Endothelial cell of umbilical vein (primary cell): ENCODE measurements at regions of chr17 and their contacts with region 1.

Region 1: DNA sequence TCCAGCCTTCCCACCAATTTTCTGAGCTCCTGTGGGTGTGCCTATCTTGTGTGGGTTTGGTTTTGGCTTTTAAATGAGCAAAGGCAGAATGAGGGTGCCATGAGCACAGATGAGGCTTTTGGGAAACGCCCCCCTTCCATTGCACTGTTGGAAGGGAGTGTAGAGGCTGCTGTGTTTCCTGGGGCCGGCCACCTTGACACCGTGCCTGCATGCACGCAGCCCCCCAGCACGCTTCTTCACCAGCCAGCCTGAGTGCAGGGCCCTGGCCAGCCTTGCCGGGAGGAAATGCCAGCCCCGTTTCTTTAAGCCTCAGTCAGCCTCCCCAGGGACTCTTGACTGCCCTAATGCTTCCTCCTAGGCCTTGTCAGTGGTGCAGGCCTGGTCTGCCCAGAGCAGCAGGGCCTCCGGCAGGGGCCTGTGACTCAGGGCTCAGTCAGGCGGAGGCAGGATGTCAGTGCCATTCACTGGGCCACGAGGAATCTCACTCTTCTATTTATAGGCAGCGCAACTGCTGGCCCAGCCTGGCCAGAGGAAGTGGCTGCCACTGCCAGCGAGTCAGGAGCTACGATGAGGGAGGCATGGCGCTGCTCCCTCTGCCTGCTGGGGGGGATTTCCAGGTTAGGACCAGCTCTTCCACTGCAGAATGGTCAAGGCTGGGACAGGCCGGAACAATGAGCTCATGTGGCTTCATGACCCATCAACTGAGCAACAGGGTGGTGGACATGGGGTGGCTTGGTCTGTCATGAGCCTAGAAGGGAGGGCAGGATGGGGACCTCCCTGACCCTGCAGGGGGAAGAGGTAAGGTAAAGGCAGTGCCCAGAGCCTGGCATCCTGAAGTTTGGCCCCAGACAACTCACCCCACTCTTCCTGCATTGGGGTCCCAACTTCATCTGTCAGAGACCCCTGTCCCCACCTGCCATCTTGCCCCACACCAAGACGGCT is 205.2 kb downstream of the RAB11FIP4 start:
- DNase-seq: peak; percentile 96
- H3K4me3 ChIP-seq: no peak overlapping the region
- H3K27ac ChIP-seq: peak overlapping the region; percentile 79
- H3K4me1 ChIP-seq: peaks cover 18% of the 10 kb centered on the region
- H3K27me3 ChIP-seq: no peaks in the 10 kb centered on the region
- CTCF ChIP-seq: no peak
- POLR2A ChIP-seq: peak; percentile 14

Region 2: GRCh38 chr17:31581022-31581490 is 15.6 kb before region 1 on chr17:
- CTCF ChIA-PET with region 1: interaction called, 12 read pairs
- POLR2A ChIA-PET with region 1: no interaction called
- dilution Hi-C with region 1: no loop called
- intact Hi-C with region 1: loop called (anchors 1 kb)
- DNase-seq: peak; percentile 78
- H3K4me3 ChIP-seq: no peak overlapping the region
- H3K27ac ChIP-seq: peak overlapping the region; percentile 59
- H3K4me1 ChIP-seq: peaks cover 57% of the 10 kb centered on the region
- H3K27me3 ChIP-seq: no peaks in the 10 kb centered on the region
- CTCF ChIP-seq: no peak
- POLR2A ChIP-seq: peak; percentile 38

Region 3: GRCh38 chr17:31663576-31663975 is 66.9 kb after region 1 on chr17:
- CTCF ChIA-PET with region 1: no interaction called
- POLR2A ChIA-PET with region 1: no interaction called
- dilution Hi-C with region 1: no loop called
- intact Hi-C with region 1: no loop called
- DNase-seq: peak; percentile 25
- H3K4me3 ChIP-seq: no peak overlapping the region
- H3K27ac ChIP-seq: no peak overlapping the region
- H3K4me1 ChIP-seq: no peaks in the 10 kb centered on the region
- H3K27me3 ChIP-seq: peaks cover 4 to 10% of the 10 kb centered on the region in 2 experiments
- CTCF ChIP-seq: no peak
- POLR2A ChIP-seq: no peak